ENCODE measurements at regions of chr21 and their contacts with region 1.

Region 1: GRCh38 chr21:27213303-27213702 is 246.4 kb upstream of the ADAMTS5 start:
- DNase-seq: no peak
- H3K4me3 ChIP-seq: no peak overlapping the region
- H3K27ac ChIP-seq: no peak overlapping the region
- H3K4me1 ChIP-seq: no peaks in the 10 kb centered on the region
- H3K27me3 ChIP-seq: no peaks in the 10 kb centered on the region
- CTCF ChIP-seq: peak in 2 of 3 experiments; percentile 33 to 45; a peak in 2 of 4 replicates
- EP300 ChIP-seq: no peak
- POLR2A ChIP-seq: no peak
- RAD21 ChIP-seq: peak; percentile 56 to 64

Region 2: GRCh38 chr21:26850108-26850643 is 363.1 kb before region 1 on chr21:
- CTCF ChIA-PET with region 1: interaction called, 10 read pairs
- POLR2A ChIA-PET with region 1: no interaction called
- DNase-seq: no peak
- H3K4me3 ChIP-seq: no peak overlapping the region
- H3K27ac ChIP-seq: no peak overlapping the region
- H3K4me1 ChIP-seq: peaks cover 0 to 14% (median 4%) of the 10 kb centered on the region in 4 experiments; a peak in 5 of 7 replicates
- H3K27me3 ChIP-seq: peaks cover 0 to 16% (median 6%) of the 10 kb centered on the region in 4 experiments; a peak in 4 of 7 replicates
- CTCF ChIP-seq: peak in 2 of 3 experiments; percentile 20 to 61; a peak in 2 of 4 replicates
- EP300 ChIP-seq: no peak
- POLR2A ChIP-seq: no peak
- RAD21 ChIP-seq: peak; percentile 62 to 65

Region 3: DNA sequence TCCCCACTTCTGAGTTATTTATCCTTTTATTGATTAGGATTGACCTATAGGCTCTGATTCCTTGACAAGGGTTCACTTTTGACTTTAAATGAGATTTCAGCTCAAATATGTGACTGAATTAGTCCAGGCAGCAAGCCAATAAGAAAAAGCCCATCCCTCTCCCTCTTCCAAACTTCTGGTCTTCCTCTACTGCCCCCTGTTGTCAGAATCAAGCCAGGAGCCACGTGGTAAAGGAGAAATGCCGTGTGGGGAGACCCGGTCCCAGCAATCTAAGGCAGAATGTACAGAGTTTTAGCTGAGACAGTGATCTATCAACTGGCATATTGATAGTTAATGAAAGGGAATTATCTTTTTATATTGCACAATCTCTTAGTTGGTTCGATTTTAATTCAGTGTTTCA is 251.6 kb before region 1 on chr21:
- CTCF ChIA-PET with region 1: interaction called, 12 read pairs
- POLR2A ChIA-PET with region 1: no interaction called
- DNase-seq: peak in 1 of 2 experiments; percentile 66
- H3K4me3 ChIP-seq: no peak overlapping the region
- H3K27ac ChIP-seq: no peak overlapping the region
- H3K4me1 ChIP-seq: peaks cover 3 to 9% (median 6%) of the 10 kb centered on the region in 4 experiments; a peak in 6 of 7 replicates
- H3K27me3 ChIP-seq: peaks cover 0 to 21% (median 17%) of the 10 kb centered on the region in 4 experiments; a peak in 6 of 7 replicates
- CTCF ChIP-seq: peak; percentile 60 to 75 (median 70)
- EP300 ChIP-seq: no peak
- POLR2A ChIP-seq: no peak
- RAD21 ChIP-seq: peak; percentile 62 to 74

Region 4: GRCh38 chr21:27225151-27225550 is 11.8 kb after region 1 on chr21:
- CTCF ChIA-PET with region 1: interaction called, 14 read pairs
- POLR2A ChIA-PET with region 1: no interaction called
- DNase-seq: no peak
- H3K4me3 ChIP-seq: no peak overlapping the region
- H3K27ac ChIP-seq: no peak overlapping the region
- H3K4me1 ChIP-seq: no peaks in the 10 kb centered on the region; a peak in 2 of 7 replicates
- H3K27me3 ChIP-seq: no peaks in the 10 kb centered on the region
- CTCF ChIP-seq: no peak
- EP300 ChIP-seq: no peak
- POLR2A ChIP-seq: no peak
- RAD21 ChIP-seq: no peak

Region 5: DNA sequence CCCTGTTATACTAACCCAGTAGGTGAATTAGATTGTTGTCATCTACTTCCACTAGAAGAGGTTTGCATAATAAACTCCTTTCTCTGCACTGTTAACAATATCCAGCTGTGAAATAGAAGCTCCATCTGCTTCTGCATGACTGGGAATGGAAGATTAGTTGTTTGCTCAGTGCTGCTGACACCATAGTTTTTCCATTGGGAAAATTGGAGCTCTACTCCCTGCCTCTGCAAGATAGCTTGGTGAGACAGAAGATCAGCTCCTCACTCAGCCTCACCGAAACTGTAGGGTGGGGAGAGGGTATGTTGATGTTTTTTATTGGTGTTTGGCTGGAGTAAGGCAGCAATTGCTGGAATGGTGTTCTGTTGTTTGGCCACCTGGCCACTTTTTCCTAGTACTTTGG is 85.2 kb after region 1 on chr21:
- CTCF ChIA-PET with region 1: no interaction called
- POLR2A ChIA-PET with region 1: no interaction called
- DNase-seq: no peak
- H3K4me3 ChIP-seq: no peak overlapping the region
- H3K27ac ChIP-seq: no peak overlapping the region
- H3K4me1 ChIP-seq: no peaks in the 10 kb centered on the region
- H3K27me3 ChIP-seq: no peaks in the 10 kb centered on the region
- CTCF ChIP-seq: no peak
- EP300 ChIP-seq: no peak
- POLR2A ChIP-seq: no peak
- RAD21 ChIP-seq: no peak

Measured in H1 (cell line).